ENCODE measurements at regions of chr12 and their contacts with region 1.

Region 1: DNA sequence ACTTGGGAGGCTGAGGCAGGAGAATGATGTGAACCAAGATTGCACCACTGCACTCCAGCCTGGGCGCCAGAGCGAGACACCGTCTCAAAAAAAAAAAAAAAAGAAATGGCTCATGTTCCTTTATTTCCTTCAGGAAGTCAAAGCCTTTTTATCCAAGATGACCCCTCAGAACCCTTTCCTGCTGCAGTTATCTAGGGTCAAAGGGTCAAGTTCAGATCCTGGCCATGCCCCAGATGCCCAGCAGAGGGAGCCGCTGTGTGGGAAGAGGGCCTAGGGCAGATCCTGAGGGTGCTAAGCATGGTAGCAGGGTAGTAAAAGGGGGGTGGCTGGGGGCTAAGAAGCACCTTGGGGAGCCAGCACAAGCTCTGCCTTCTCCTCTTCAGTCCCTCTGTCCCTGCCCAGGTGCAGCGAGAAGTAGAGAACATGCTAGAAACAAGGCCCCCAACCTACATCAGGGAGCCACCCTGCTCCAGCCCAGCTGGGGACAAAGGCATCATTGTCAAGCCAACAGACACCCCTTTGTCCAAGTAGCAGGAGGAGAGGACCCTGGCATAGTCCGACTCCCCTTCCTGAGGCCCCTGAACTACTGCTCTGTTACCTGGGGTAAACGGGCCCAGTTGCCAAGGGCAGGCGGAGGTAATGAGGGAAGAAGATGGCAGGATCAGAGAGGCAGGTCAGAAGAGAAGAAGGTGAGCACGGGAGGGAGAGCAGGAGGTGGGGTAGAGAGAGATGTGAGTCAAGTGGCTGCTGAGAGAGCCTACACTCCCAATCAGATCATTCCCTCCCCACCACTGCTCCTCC is 6.5 kb downstream of the NFE2 start:
- DNase-seq: no peak

Region 2: GRCh38 chr12:54191550-54192022 is 102.8 kb before region 1 on chr12:
- in situ Hi-C with region 1: no loop called
- DNase-seq: peak; percentile 88

Region 3: DNA sequence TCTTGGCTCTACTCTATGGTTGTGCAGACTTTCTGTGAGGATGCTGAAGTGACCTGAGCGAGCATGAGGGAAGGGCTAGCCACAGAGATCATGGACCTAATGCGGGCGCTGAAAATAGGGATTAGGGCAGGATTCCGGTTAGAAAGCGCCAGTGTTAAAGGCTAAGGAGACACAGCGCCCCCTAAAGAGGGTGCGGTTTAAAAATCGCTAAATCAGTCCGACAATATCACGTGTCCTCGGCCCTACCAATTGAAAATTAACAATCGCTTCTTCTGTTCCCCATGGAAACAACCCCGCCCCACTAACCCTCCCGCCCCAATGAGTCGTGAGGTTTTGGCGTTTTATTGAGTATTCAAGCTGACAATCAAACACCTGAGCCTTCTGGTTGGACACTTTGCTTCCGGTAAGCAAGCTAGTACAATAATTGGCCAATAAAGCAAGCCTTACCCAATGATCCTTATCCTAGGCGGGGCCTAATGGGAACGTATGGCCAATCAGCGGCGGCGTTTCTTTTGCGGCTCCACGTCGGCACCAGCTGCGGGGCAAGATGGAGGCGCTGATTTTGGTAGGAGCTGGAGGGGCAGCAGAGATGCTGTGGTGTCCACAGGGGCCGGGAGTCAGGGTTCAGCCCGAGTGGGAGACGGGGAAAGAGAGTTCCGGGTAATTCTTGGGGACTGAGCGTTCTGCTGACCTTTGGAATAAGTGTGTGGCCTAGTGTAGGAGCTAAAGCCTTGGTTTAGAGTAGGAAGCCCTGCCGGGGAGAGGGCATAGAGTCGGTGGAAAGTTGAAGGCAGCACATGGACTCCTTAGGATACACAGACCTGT is 30.5 kb after region 1 on chr12 and contains the start of gene COPZ1:
- in situ Hi-C with region 1: loop called (anchors 5 kb)
- DNase-seq: peak; percentile 100
- total RNA-seq, gene COPZ1: 219 and 225 TPM in 2 replicates

Region 4: GRCh38 chr12:54439521-54440255 is 145.3 kb after region 1 on chr12:
- in situ Hi-C with region 1: no loop called
- DNase-seq: peak; percentile 85